ENCODE measurements at regions of chr5 and their contacts with region 1.

Region 1: GRCh38 chr5:32027717-32028321 is 146.3 kb downstream of the GOLPH3 start:
- DNase-seq: peak; percentile 72 to 86
- H3K4me3 ChIP-seq: no peak overlapping the region
- H3K27ac ChIP-seq: peak overlapping the region; percentile 57 to 72
- H3K4me1 ChIP-seq: peaks cover 0 to 7% of the 10 kb centered on the region in 2 donors
- H3K27me3 ChIP-seq: no peaks in the 10 kb centered on the region
- CTCF ChIP-seq: no peak
- POLR2A ChIP-seq: no peak

Region 2: GRCh38 chr5:31935702-31936369 is 92.0 kb before region 1 on chr5:
- intact Hi-C with region 1: loop called (anchors 10 kb)
- DNase-seq: peak; percentile 37 to 38
- H3K4me3 ChIP-seq: peak overlapping the region; percentile 11 to 35
- H3K27ac ChIP-seq: peak overlapping the region; percentile 57 to 64
- H3K4me1 ChIP-seq: no peaks in the 10 kb centered on the region
- H3K27me3 ChIP-seq: no peaks in the 10 kb centered on the region
- CTCF ChIP-seq: no peak
- POLR2A ChIP-seq: no peak

Region 3: GRCh38 chr5:32504989-32505596 is 477.3 kb after region 1 on chr5:
- intact Hi-C with region 1: no loop called
- DNase-seq: peak; percentile 81 to 93
- H3K4me3 ChIP-seq: no peak overlapping the region
- H3K27ac ChIP-seq: peak overlapping the region; percentile 65 to 84
- H3K4me1 ChIP-seq: peaks cover 11 to 25% of the 10 kb centered on the region in 2 donors
- H3K27me3 ChIP-seq: no peaks in the 10 kb centered on the region
- CTCF ChIP-seq: no peak
- POLR2A ChIP-seq: no peak

Measured in uterus (tissue), 4 donors.